ENCODE measurements at regions of chr4 and their contacts with region 1.

Region 1: GRCh38 chr4:151325111-151325948 is at the start of gene SH3D19:
- DNase-seq: peak; percentile 93
- H3K4me3 ChIP-seq: peak within 1 kb of the TSS; percentile 85 to 90 (median 87)
- H3K27ac ChIP-seq: peak within 1 kb of the TSS; percentile 95 to 98 (median 96)
- H3K4me1 ChIP-seq: peaks cover 26 to 53% (median 41%) of the 10 kb centered on the region in 4 donors
- H3K27me3 ChIP-seq: no peaks in the 10 kb centered on the region
- CTCF ChIP-seq: peak in 1 of 3 experiments; percentile 19
- EP300 ChIP-seq: no peak
- POLR2A ChIP-seq: no peak
- total RNA-seq, gene SH3D19: 115 to 186 (median 177) TPM

Region 2: DNA sequence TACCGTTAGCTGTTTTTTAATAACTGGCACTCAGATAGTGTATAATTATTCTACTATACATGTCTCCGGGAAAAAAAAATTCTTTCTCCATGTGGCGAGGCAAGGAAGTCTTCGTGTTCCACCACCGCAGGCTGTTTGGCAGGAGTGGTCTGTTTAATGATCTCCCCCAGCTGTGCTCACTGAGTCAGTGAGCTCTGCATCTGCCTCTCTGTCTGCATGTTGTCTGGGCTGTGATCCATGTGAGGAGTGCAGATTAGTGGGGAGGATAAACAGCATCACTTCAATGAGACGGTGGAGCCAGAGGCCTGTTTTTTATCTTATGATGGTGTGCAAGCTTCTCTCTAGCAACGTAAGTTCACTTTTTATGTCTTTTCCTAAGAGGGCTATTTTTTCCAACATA is 156.1 kb before region 1 on chr4:
- intact Hi-C with region 1: loop called (anchors 10 kb)
- DNase-seq: no peak
- H3K4me3 ChIP-seq: no peak overlapping the region
- H3K27ac ChIP-seq: peak overlapping the region; percentile 40 to 71 (median 65)
- H3K4me1 ChIP-seq: peaks cover 19 to 72% (median 54%) of the 10 kb centered on the region in 4 donors
- H3K27me3 ChIP-seq: no peaks in the 10 kb centered on the region
- CTCF ChIP-seq: no peak
- EP300 ChIP-seq: no peak
- POLR2A ChIP-seq: no peak

Region 3: DNA sequence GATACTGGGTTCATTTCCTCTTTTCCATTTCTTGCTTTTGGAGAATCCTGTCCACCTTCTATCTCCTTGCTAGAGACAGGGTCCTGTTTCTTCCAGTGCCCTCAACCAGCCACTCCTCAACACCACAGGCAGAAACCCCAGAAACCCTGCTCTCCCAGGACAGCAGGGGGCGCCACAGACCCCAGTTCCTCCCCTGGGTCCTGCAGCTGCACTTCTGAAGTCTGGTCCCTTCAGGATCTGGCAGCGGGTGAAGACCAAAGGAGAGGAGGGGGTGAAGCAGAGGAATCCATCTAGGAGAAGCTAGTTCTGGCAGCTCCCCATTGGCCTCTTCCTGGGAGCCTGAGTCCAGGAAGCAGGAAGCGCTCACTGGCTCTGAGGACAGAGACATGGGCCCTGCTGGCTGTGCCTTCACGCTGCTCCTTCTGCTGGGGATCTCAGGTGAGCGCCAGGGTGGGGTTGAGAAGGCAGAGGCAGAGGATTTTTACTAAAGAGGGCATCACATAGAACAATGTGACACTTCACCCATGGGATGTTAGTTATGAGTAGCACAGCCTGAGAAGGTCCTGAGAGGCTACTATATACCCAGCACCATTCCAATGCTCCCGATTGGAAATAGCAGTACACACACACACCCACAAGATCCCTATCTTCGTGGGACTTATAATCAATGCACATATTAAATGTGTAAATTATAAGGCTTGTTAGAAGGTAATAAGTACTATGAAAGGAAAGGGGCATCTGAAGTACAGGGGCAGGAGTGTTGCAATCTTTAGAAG is 48.4 kb before region 1 on chr4 and contains the start of gene PRSS48:
- intact Hi-C with region 1: no loop called
- DNase-seq: no peak
- H3K4me3 ChIP-seq: no peak within 1 kb of the TSS
- H3K27ac ChIP-seq: no peak within 1 kb of the TSS
- H3K4me1 ChIP-seq: peaks cover 12 to 32% (median 21%) of the 10 kb centered on the region in 4 donors
- H3K27me3 ChIP-seq: no peaks in the 10 kb centered on the region
- CTCF ChIP-seq: peak; percentile 51 to 72 (median 58)
- EP300 ChIP-seq: no peak
- POLR2A ChIP-seq: no peak
- total RNA-seq, gene PRSS48: not detected

Region 4: GRCh38 chr4:151418385-151418784 is 93.1 kb after region 1 on chr4:
- intact Hi-C with region 1: no loop called
- DNase-seq: no peak
- H3K4me3 ChIP-seq: no peak overlapping the region
- H3K27ac ChIP-seq: no peak overlapping the region
- H3K4me1 ChIP-seq: peaks cover 0 to 3% (median 0%) of the 10 kb centered on the region in 4 donors
- H3K27me3 ChIP-seq: no peaks in the 10 kb centered on the region
- CTCF ChIP-seq: no peak
- EP300 ChIP-seq: no peak
- POLR2A ChIP-seq: no peak

Region 5: GRCh38 chr4:151674804-151675391 is 349.6 kb after region 1 on chr4:
- intact Hi-C with region 1: no loop called
- DNase-seq: no peak
- H3K4me3 ChIP-seq: peak overlapping the region; percentile 45 to 57 (median 47)
- H3K27ac ChIP-seq: peak overlapping the region; percentile 38 to 68 (median 53)
- H3K4me1 ChIP-seq: peaks cover 14 to 25% (median 18%) of the 10 kb centered on the region in 4 donors
- H3K27me3 ChIP-seq: no peaks in the 10 kb centered on the region
- CTCF ChIP-seq: peak in 1 of 3 experiments; percentile 41
- EP300 ChIP-seq: no peak
- POLR2A ChIP-seq: no peak

Measured in esophagus muscularis mucosa (tissue), 4 donors.